ENCODE measurements at regions of chr17 and their contacts with region 1.

Region 1: GRCh38 chr17:47840740-47841603 is at the start of gene SCRN2:
- DNase-seq: peak; percentile 89 to 96
- ATAC-seq: peak; percentile 96 to 99 (median 98)
- H3K4me3 ChIP-seq: peak within 1 kb of the TSS; percentile 77
- H3K27ac ChIP-seq: peak within 1 kb of the TSS; percentile 65
- H3K4me1 ChIP-seq: peaks cover 13% of the 10 kb centered on the region
- H3K27me3 ChIP-seq: peaks cover 0 to 7% (median 0%) of the 10 kb centered on the region in 3 donors
- CTCF ChIP-seq: peak; percentile 96
- total RNA-seq, gene SCRN2: 12.2 to 33.5 (median 19.5) TPM

Region 2: GRCh38 chr17:47774331-47774730 is 66.6 kb before region 1 on chr17:
- intact Hi-C with region 1: no loop called
- DNase-seq: no peak
- ATAC-seq: no peak
- H3K4me3 ChIP-seq: no peak overlapping the region
- H3K27ac ChIP-seq: no peak overlapping the region
- H3K4me1 ChIP-seq: no peaks in the 10 kb centered on the region
- H3K27me3 ChIP-seq: peaks cover 0 to 47% (median 19%) of the 10 kb centered on the region in 3 donors
- CTCF ChIP-seq: no peak

Region 3: GRCh38 chr17:47789611-47790561 is 51.1 kb before region 1 on chr17:
- intact Hi-C with region 1: no loop called
- DNase-seq: peak; percentile 53 to 72
- ATAC-seq: peak; percentile 88 to 98 (median 92)
- H3K4me3 ChIP-seq: peak overlapping the region; percentile 61
- H3K27ac ChIP-seq: no peak overlapping the region
- H3K4me1 ChIP-seq: peaks cover 4% of the 10 kb centered on the region
- H3K27me3 ChIP-seq: peaks cover 2 to 76% (median 15%) of the 10 kb centered on the region in 3 donors
- CTCF ChIP-seq: peak; percentile 59

Region 4: GRCh38 chr17:47889734-47890529 is 49.0 kb after region 1 on chr17:
- intact Hi-C with region 1: loop called (anchors 1 to 2 kb)
- DNase-seq: peak; percentile 87 to 94
- ATAC-seq: peak; percentile 93 to 97 (median 94)
- H3K4me3 ChIP-seq: no peak overlapping the region
- H3K27ac ChIP-seq: no peak overlapping the region
- H3K4me1 ChIP-seq: peaks cover 8% of the 10 kb centered on the region
- H3K27me3 ChIP-seq: peaks cover 0 to 3% (median 0%) of the 10 kb centered on the region in 3 donors
- CTCF ChIP-seq: peak; percentile 98

Region 5: DNA sequence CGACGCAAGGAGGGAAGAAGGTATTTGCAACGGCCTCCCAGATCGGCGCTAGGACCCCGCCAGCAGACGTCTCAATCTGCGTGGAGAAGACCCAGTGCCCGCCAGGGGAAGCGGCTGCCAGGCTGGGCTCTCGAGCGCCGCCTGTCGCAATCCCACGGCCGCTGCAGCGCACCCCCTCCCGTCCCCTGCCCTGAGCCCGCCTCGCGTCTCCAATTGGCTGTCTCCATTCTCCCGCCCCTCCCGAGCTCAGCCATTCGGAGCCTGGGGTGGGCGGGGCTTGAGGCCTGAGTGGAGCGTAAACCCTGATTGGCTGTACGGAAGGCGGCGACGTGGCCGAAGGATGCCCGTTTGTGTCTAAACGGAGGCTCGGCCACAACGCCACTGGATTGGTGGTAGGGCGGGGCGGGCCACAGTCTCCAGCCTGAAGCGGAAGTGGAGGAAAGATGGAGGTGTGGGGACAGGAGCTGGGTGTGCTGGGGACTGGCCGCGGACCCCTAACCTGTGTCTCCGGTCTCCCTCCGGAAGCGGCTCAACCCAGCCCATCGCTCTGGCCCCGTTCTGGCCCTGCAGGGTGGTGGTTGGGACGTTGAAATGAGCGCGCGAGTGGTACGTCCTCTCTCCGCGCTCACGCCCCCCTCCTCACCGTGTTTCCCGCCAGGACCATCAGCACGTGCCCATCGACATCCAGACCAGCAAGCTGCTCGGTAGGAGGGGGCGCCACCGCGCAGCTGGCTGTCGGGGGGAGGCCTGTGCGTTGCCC is 129.9 kb after region 1 on chr17 and contains the start of gene CDK5RAP3:
- intact Hi-C with region 1: loop called in 1 of 2 experiments (anchors 1 kb)
- DNase-seq: peak; percentile 100
- ATAC-seq: peak; percentile 99 to 100 (median 100)
- H3K4me3 ChIP-seq: peak within 1 kb of the TSS; percentile 95
- H3K27ac ChIP-seq: peak within 1 kb of the TSS; percentile 93
- H3K4me1 ChIP-seq: no peaks in the 10 kb centered on the region
- H3K27me3 ChIP-seq: no peaks in the 10 kb centered on the region
- CTCF ChIP-seq: peak; percentile 90
- total RNA-seq, gene CDK5RAP3: 21.0 to 44.1 (median 34.5) TPM

Region 6: GRCh38 chr17:48016112-48016511 is 175.1 kb after region 1 on chr17:
- intact Hi-C with region 1: loop called in 1 of 2 experiments (anchors 5 kb)
- DNase-seq: no peak
- ATAC-seq: no peak
- H3K4me3 ChIP-seq: no peak overlapping the region
- H3K27ac ChIP-seq: no peak overlapping the region
- H3K4me1 ChIP-seq: peaks cover 8% of the 10 kb centered on the region
- H3K27me3 ChIP-seq: peaks cover 0 to 30% (median 8%) of the 10 kb centered on the region in 3 donors
- CTCF ChIP-seq: no peak

Measured in psoas muscle (tissue), 8 donors.